ENCODE measurements at regions of chr17 and their contacts with region 1.

Region 1: GRCh38 chr17:18033442-18034099 is 5.4 kb downstream of the ATPAF2 start:
- DNase-seq: peak; percentile 49
- H3K4me3 ChIP-seq: no peak overlapping the region
- CTCF ChIP-seq: peak; percentile 40

Region 2: DNA sequence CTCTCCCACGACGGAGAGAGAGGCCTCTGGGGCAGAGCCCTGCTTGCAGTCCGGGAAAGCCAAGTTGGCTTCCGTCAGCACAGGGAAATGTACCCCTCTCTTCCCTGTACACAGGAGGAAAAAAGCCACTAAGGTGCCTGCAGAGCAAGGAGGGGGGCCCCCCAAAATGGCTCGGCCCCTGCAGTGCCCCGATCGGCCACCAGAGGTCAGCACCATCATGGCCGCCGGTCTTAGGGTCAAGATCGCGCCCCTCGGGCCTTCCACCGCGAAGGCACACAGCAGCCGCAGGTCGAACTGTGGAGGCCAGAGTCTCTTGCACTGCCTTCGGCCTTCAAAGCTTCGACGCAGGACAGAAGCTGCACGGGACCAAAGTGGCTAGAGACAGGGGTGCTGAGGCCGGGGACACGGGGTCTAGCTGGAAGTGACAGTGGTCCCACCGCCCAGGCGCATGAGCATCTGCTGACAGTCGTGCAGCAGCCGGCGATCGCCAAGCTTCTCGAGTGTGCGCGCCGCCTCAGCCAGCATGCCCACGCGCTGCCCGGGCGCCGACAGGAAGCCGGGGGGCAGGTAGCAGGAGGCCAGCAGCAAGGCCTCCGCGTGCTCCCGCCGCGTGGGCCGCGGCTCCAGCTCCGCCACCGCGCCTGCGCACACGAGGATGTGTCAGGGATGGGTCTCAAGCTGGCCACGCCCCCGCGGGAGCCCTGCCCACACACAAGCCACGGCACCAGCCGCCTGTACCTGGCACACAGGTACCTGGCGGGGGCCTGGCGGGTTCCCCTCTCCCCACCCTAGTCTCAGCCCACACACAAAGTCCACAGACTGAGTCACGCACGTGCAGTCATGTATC is 221.1 kb before region 1 on chr17:
- CTCF ChIA-PET with region 1: interaction called, 37 read pairs
- POLR2A ChIA-PET with region 1: no interaction called
- DNase-seq: no peak
- H3K4me3 ChIP-seq: no peak overlapping the region
- CTCF ChIP-seq: peak; percentile 90

Region 3: DNA sequence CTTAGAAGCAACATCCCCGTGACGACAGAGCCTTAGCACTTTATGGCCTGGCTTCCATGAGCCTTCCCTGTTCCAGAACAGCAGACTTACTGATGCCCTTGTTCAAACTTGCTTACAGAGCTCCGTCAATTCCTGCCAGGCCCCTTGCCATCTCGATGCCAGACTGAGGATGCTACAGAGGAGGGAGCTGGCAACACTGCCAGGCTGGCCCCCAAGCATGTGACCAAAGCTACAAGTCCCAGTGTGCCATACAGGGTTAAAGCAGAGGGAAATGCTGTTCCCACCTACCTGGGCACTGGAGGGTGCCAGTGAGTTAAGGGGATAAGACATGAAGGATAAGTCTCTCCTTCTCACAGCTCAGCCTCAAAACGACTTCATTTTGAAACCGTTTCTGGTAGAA is 163.3 kb before region 1 on chr17:
- CTCF ChIA-PET with region 1: interaction called, 12 read pairs
- POLR2A ChIA-PET with region 1: interaction called, 3 read pairs
- DNase-seq: no peak
- H3K4me3 ChIP-seq: no peak overlapping the region
- CTCF ChIP-seq: no peak

Region 4: GRCh38 chr17:17890773-17891759 is 142.5 kb before region 1 on chr17:
- CTCF ChIA-PET with region 1: interaction called, 167 read pairs
- POLR2A ChIA-PET with region 1: no interaction called
- DNase-seq: no peak
- H3K4me3 ChIP-seq: no peak overlapping the region
- CTCF ChIP-seq: peak; percentile 91

Region 5: GRCh38 chr17:17919169-17920107 is 114.1 kb before region 1 on chr17:
- CTCF ChIA-PET with region 1: interaction called, 14 read pairs
- POLR2A ChIA-PET with region 1: no interaction called
- DNase-seq: no peak
- H3K4me3 ChIP-seq: no peak overlapping the region
- CTCF ChIP-seq: peak; percentile 79

Region 6: DNA sequence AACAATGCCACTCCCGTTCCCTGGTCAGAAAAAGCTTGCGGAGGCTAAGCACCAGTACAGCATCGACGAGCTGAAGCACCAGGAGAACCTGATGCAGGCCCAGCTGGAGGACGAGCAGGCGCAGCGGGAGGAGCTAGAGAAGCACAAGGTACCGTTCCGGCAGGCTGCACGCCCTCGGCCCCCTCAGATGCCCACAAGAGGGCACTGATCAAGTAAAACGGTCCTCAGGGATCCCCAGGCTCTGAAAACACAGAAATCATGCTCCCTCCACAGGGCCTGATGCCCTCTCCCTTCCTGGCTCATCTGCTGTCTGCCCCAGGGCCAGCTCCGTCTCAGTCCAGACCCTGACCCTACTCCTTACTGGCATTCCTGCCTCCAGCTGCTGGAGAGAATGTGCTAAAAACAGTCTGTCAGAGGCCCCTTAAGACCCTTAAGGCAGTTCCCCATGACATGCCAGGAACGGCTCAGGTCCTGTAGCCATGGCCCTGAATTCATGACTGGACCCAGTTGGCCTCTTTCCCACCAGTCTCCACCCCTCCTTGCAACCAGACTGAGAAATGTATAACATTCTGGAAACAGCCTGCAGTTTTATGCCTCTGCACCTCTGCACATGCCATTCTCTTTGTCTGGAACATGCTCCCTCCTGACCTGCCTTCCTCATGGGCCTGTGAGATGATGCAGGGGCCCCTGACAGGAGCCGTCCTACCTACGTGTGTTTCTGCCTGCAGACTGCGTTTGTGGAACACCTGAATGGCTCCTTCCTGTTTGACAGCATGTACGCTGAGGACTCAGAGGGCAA is 39.1 kb before region 1 on chr17:
- CTCF ChIA-PET with region 1: interaction called, 42 read pairs
- POLR2A ChIA-PET with region 1: no interaction called
- DNase-seq: no peak
- H3K4me3 ChIP-seq: no peak overlapping the region
- CTCF ChIP-seq: peak; percentile 50

Region 7: DNA sequence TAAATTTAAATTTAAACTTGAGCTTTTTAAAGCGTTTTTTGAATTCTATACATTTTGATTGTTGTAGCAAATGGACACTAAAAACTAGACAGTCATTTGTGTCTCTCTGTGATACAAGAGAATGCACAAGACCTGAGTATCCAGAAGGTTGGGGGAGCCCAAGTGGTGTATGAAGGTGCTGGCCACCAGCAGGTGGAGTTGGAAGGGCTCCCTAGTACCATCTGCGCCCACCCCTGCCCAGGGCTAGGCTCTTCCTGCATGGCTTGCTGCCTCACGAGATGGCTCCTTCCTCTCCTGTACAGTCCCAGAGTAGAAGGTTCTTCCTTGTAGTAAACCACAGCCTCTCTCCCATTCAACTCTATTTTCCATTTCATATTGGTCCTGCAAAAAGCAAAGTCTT is 22.6 kb after region 1 on chr17:
- CTCF ChIA-PET with region 1: no interaction called
- POLR2A ChIA-PET with region 1: no interaction called
- DNase-seq: no peak
- H3K4me3 ChIP-seq: no peak overlapping the region
- CTCF ChIP-seq: no peak

Measured in AG04449 (cell line).